ENCODE measurements at regions of chr11 and their contacts with region 1.

Region 1: GRCh38 chr11:554824-555472 is 5.6 kb downstream of the LMNTD2 start:
- DNase-seq: peak; percentile 44
- ATAC-seq: peak; percentile 15
- H3K4me3 ChIP-seq: peak overlapping the region; percentile 47 to 71 (median 52); a peak in 5 of 6 replicates
- H3K27ac ChIP-seq: no peak overlapping the region
- H3K4me1 ChIP-seq: peaks cover 78% of the 10 kb centered on the region
- H3K27me3 ChIP-seq: peaks cover 7 to 13% of the 10 kb centered on the region in 2 experiments; a peak in 3 of 5 replicates
- CTCF ChIP-seq: peak; percentile 84
- EP300 ChIP-seq: no peak
- POLR2A ChIP-seq: no peak
- RAD21 ChIP-seq: peak; percentile 62; the same call in 1 of the 2 replicates

Region 2: GRCh38 chr11:279966-280582 is 274.9 kb before region 1 on chr11:
- CTCF ChIA-PET with region 1: no interaction called
- POLR2A ChIA-PET with region 1: no interaction called
- in situ Hi-C with region 1: no loop called
- intact Hi-C with region 1: no loop called
- DNase-seq: no peak
- ATAC-seq: peak; percentile 35
- H3K4me3 ChIP-seq: peak overlapping the region in 2 of 3 experiments; percentile 19 to 48; a peak in 2 of 6 replicates
- H3K27ac ChIP-seq: no peak overlapping the region
- H3K4me1 ChIP-seq: peaks cover 15% of the 10 kb centered on the region
- H3K27me3 ChIP-seq: peaks cover 7 to 67% of the 10 kb centered on the region in 2 experiments
- CTCF ChIP-seq: no peak
- EP300 ChIP-seq: no peak
- POLR2A ChIP-seq: no peak
- RAD21 ChIP-seq: no peak

Region 3: GRCh38 chr11:597166-597725 is 42.3 kb after region 1 on chr11:
- CTCF ChIA-PET with region 1: no interaction called
- POLR2A ChIA-PET with region 1: no interaction called
- in situ Hi-C with region 1: loop called (anchors 5 kb)
- intact Hi-C with region 1: no loop called
- DNase-seq: no peak
- ATAC-seq: peak; percentile 79
- H3K4me3 ChIP-seq: no peak overlapping the region
- H3K27ac ChIP-seq: no peak overlapping the region
- H3K4me1 ChIP-seq: peaks cover 12% of the 10 kb centered on the region
- H3K27me3 ChIP-seq: no peaks in the 10 kb centered on the region
- CTCF ChIP-seq: peak; percentile 35; the same call in 1 of the 2 replicates
- EP300 ChIP-seq: no peak
- POLR2A ChIP-seq: no peak
- RAD21 ChIP-seq: no peak

Region 4: DNA sequence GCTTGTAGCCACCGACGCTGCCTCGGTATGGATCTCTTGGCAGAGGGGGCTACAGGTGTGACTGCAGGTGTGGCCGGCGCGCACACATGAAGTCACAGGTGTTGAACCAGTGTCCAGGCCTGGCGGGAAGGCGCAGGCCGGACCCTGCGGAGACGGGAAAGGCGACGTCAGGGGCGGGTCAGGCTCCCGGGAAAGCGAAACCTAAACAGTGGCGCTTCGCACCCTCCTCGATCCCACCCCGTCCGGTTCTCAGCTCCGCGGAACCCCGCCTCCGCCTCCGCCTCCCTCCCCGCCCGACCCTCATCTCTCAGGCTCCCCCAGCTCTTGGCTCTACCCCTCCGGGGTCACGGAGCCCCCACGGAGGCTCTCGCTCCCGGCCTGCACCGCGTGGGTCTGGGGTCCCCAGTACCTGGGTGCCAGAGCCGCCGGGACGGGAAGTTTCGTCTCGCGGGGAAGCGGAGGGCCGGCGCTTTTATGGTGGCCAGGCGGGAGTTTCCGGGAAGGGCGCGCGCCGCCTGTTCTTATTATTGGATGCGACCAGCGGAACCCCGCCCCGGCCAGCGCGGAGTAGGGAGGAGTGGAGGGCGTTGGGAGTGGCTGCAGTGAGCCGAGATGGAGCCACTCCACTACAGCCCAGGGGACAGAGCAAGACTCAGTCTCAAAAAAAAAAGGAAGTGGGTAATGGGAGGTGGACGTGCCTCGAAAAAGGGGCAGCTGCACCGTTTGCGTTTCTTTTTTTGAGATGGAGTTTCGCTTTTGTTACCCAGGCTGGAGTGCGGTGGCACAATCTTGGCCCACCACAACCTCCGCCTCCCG is 60.8 kb after region 1 on chr11 and contains the start of gene IRF7:
- CTCF ChIA-PET with region 1: no interaction called
- POLR2A ChIA-PET with region 1: no interaction called
- in situ Hi-C with region 1: loop called (anchors 10 kb)
- intact Hi-C with region 1: loop called (anchors 10 kb)
- DNase-seq: no peak
- ATAC-seq: no peak
- H3K4me3 ChIP-seq: no peak within 1 kb of the TSS
- H3K27ac ChIP-seq: no peak within 1 kb of the TSS
- H3K4me1 ChIP-seq: no peaks in the 10 kb centered on the region
- H3K27me3 ChIP-seq: no peaks in the 10 kb centered on the region
- CTCF ChIP-seq: no peak
- EP300 ChIP-seq: no peak
- POLR2A ChIP-seq: no peak
- RAD21 ChIP-seq: no peak
- total RNA-seq, gene IRF7: not detected in 2 replicates

Region 5: DNA sequence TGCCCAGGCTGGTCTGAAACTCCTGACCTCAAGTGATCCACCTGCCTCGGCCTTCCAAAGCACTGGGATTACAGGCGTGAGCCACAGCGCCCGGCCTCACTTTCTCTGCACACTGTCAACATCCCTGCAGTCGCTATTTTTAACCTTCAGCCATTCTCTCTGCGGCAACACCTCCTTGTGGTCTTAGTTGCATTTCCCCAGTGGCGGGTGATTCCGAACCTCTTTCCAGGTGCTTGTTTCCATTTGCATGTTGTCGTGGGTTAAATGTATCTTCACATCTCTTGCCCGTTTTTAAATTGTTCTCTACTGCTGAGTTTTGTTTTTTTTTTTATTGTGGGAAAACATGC is 74.3 kb after region 1 on chr11:
- CTCF ChIA-PET with region 1: no interaction called
- POLR2A ChIA-PET with region 1: no interaction called
- in situ Hi-C with region 1: loop called (anchors 10 kb)
- intact Hi-C with region 1: no loop called
- DNase-seq: no peak
- ATAC-seq: no peak
- H3K4me3 ChIP-seq: no peak overlapping the region
- H3K27ac ChIP-seq: no peak overlapping the region
- H3K4me1 ChIP-seq: peaks cover 21% of the 10 kb centered on the region
- H3K27me3 ChIP-seq: no peaks in the 10 kb centered on the region
- CTCF ChIP-seq: no peak
- EP300 ChIP-seq: no peak
- POLR2A ChIP-seq: no peak
- RAD21 ChIP-seq: no peak

Measured in HepG2 (cell line).